ENCODE measurements at regions of chr22 and their contacts with region 1.

Region 1: GRCh38 chr22:17638432-17639246 is at the start of gene BCL2L13:
- DNase-seq: peak; percentile 85
- H3K4me3 ChIP-seq: peak within 1 kb of the TSS; percentile 60 to 92 (median 86)
- H3K27ac ChIP-seq: peak within 1 kb of the TSS; percentile 88
- H3K4me1 ChIP-seq: peaks cover 16% of the 10 kb centered on the region
- H3K27me3 ChIP-seq: no peaks in the 10 kb centered on the region
- CTCF ChIP-seq: no peak
- POLR2A ChIP-seq: peak; percentile 76
- total RNA-seq, gene BCL2L13: 36.2 TPM in 2 replicates

Region 2: DNA sequence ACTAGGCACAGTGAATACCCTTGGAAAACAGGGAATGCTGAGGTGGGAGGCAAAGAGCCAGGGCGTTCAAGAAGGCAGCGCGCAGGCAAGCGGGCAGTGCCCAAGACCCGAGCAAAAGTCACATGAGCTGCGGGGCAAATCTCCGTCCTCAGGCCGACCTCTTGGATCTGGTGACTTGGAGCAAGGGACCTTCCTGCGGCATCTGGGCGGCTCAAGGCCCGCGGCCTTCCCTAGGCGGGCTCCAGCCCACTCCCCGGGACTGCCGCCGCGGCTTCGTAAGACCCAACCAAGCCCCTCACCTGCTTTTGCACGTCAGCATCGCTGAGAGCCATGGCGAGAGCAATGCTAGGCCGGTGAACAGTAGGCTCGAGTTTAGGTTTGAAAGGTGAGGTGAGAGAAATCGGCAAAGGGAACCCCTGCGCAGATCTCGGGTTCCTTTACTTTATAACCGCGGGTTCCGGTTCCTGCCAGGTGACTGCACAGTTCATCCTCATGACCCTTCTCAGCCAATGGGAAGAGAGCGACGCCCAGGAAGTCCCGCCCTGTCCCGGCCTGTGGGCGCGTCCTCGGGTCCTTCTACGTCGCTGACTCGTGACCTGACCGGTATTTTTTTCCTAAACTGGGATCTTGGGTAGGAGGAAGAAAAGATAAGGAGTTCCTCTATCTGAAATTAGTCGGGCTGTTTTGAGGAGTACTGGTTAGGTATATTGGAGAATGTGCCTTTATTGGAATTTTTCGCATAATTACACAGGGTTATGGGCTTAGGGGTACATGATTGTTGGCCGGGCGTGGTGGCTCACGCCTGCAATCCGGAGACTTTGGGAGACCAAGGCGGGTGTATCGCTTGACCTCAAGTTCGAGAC is 10.1 kb before region 1 on chr22 and contains the start of gene ATP6V1E1:
- CTCF ChIA-PET with region 1: no interaction called
- POLR2A ChIA-PET with region 1: no interaction called
- dilution Hi-C with region 1: no loop called
- intact Hi-C with region 1: loop called (anchors 1 kb)
- DNase-seq: peak; percentile 98
- H3K4me3 ChIP-seq: peak within 1 kb of the TSS; percentile 72 to 93 (median 92)
- H3K27ac ChIP-seq: peak within 1 kb of the TSS; percentile 93
- H3K4me1 ChIP-seq: peaks cover 8% of the 10 kb centered on the region
- H3K27me3 ChIP-seq: no peaks in the 10 kb centered on the region
- CTCF ChIP-seq: no peak
- POLR2A ChIP-seq: peak; percentile 75
- total RNA-seq, gene ATP6V1E1: 113 and 118 TPM in 2 replicates

Region 3: GRCh38 chr22:17678872-17679271 is 40.2 kb after region 1 on chr22:
- CTCF ChIA-PET with region 1: no interaction called
- POLR2A ChIA-PET with region 1: no interaction called
- dilution Hi-C with region 1: no loop called
- intact Hi-C with region 1: no loop called
- DNase-seq: no peak
- H3K4me3 ChIP-seq: no peak overlapping the region
- H3K27ac ChIP-seq: no peak overlapping the region
- H3K4me1 ChIP-seq: no peaks in the 10 kb centered on the region
- H3K27me3 ChIP-seq: no peaks in the 10 kb centered on the region
- CTCF ChIP-seq: no peak
- POLR2A ChIP-seq: no peak

Region 4: DNA sequence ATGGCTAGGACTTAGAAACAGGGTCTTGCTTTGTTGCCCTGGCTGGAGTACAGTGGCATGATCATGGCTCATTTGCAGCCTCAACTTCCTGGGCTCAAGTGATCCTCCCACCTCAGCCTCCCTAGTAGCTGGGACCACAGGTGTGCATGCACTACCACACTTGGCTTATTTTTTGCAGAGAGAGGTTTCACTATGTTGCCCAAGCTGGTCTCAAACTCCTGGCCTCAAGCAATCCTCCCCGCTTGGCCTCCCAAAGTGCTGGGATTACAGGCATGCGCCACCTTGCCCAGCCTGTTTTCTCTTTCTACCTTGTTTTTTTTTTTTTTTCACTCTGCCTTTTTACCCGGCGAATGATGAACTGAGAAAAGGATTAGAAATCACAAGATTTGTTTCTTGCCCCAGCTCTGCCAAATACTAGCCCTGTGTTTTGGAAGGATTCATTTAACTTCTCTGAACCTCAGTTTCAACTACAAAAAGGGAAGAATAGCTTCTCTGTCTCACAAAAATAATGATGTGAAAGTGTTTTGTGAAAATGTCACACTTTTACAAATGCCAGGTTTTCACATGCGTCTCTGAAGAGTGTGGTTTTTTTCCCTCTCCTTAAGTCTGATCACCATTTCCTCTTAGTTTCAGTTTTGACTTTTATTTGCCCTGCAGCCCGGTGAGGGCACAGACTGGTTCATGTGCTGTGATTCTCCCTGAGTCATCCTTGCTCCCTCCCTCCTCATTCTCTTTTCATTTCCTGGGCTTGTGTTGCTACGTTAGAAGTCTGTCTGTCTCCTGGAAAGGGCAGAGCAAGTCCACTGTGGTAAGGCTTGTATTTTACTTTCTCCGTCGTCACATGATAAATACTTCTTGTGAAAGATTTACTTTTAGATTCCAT is 67.6 kb after region 1 on chr22:
- CTCF ChIA-PET with region 1: interaction called, 3 read pairs
- POLR2A ChIA-PET with region 1: no interaction called
- dilution Hi-C with region 1: no loop called
- intact Hi-C with region 1: loop called (anchors 2 kb)
- DNase-seq: peak; percentile 93
- H3K4me3 ChIP-seq: peak overlapping the region; percentile 27 to 84 (median 42)
- H3K27ac ChIP-seq: peak overlapping the region; percentile 91
- H3K4me1 ChIP-seq: peaks cover 19% of the 10 kb centered on the region
- H3K27me3 ChIP-seq: no peaks in the 10 kb centered on the region
- CTCF ChIP-seq: no peak
- POLR2A ChIP-seq: peak; percentile 41

Region 5: DNA sequence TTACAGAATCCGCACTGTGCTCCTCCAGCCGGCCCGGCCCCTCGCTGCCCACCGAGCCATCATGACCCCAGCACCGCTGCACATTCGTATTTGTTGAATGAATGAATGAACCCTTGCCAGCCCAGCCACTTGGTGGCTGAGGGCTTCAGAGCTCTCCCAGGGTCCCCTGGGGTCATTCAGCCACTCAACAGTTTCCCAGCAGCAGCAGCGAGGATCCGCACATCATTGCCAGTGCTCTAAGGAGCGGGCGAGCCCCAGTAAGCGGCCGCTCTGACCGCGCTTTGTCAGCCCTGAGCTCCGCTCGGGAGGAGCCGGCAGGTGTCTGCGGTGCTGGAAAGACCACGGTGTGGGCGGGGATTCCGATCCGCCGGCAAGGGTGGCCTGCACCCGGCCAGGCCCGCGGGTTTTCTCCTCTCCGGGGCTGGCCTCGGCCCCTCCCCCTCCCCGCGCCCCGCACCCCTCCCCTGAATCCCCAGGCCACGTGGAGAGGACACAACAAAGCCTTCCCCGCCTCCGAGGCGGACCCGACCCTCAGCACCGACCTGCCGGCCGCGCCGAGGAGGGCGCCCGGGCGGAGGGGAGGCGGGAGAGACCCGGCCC is 135.1 kb after region 1 on chr22:
- CTCF ChIA-PET with region 1: no interaction called
- POLR2A ChIA-PET with region 1: no interaction called
- dilution Hi-C with region 1: no loop called
- intact Hi-C with region 1: loop called (anchors 10 kb)
- DNase-seq: peak; percentile 34
- H3K4me3 ChIP-seq: peak overlapping the region; percentile 52 to 72 (median 59)
- H3K27ac ChIP-seq: peak overlapping the region; percentile 34
- H3K4me1 ChIP-seq: peaks cover 13% of the 10 kb centered on the region
- H3K27me3 ChIP-seq: no peaks in the 10 kb centered on the region
- CTCF ChIP-seq: no peak
- POLR2A ChIP-seq: no peak

Region 6: DNA sequence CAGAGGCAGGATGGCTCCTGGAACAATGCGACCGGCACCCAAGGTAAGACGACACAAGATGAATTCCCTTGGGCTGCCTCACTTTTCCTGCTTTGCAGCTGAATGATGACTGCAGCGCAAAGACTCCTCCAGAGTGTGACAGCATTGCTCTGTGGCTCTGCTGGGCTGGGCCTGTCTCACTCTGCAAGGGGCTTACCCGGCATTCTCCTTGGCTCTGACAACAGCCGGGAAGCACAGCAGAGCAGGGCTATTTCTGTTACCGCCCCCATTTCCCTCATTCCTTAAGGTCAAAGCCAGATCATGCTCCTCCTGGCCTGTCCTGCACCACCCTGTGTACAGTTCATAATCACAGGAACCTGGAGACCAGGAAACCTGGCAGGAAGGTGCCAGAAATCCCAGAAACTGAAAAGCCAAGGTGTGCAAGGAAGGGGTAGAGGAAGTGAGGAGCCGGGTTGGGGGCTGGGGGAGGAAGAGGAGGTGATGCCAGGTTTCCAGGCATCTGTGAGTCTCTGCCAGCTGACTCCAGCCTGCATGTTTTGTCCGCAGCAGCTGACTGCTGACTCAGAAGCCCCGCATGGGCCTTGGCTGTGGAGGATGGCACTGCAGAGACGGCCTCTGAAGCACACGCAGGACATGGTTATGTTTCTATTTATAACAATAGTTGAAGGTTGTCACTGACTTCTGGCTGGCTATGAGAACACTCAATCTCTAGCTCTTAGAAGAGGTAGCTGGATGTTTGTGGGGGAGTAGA is 272.1 kb after region 1 on chr22:
- CTCF ChIA-PET with region 1: no interaction called
- POLR2A ChIA-PET with region 1: no interaction called
- dilution Hi-C with region 1: no loop called
- intact Hi-C with region 1: no loop called
- DNase-seq: peak; percentile 94
- H3K4me3 ChIP-seq: no peak overlapping the region
- H3K27ac ChIP-seq: peak overlapping the region; percentile 69
- H3K4me1 ChIP-seq: peaks cover 20% of the 10 kb centered on the region
- H3K27me3 ChIP-seq: no peaks in the 10 kb centered on the region
- CTCF ChIP-seq: peak; percentile 13 to 40
- POLR2A ChIP-seq: no peak